ENCODE measurements at regions of chr6 and their contacts with region 1.

Region 1: GRCh38 chr6:89080542-89081422 is at the start of gene PNRC1:
- DNase-seq: peak; percentile 100
- ATAC-seq: peak; percentile 96
- H3K4me3 ChIP-seq: peak within 1 kb of the TSS; percentile 89 to 95
- H3K27ac ChIP-seq: peak within 1 kb of the TSS; percentile 99 to 100
- H3K4me1 ChIP-seq: peaks cover 0 to 2% of the 10 kb centered on the region in 2 donors
- H3K27me3 ChIP-seq: no peaks in the 10 kb centered on the region
- total RNA-seq, gene PNRC1: 280 to 342 TPM

Region 2: GRCh38 chr6:89022798-89023197 is 58.0 kb before region 1 on chr6:
- intact Hi-C with region 1: loop called (anchors 2 to 5 kb)
- DNase-seq: no peak
- ATAC-seq: peak; percentile 64
- H3K4me3 ChIP-seq: no peak overlapping the region
- H3K27ac ChIP-seq: peak overlapping the region in 1 of 2 donors; percentile 58
- H3K4me1 ChIP-seq: peaks cover 3 to 8% of the 10 kb centered on the region in 2 donors
- H3K27me3 ChIP-seq: no peaks in the 10 kb centered on the region

Region 3: DNA sequence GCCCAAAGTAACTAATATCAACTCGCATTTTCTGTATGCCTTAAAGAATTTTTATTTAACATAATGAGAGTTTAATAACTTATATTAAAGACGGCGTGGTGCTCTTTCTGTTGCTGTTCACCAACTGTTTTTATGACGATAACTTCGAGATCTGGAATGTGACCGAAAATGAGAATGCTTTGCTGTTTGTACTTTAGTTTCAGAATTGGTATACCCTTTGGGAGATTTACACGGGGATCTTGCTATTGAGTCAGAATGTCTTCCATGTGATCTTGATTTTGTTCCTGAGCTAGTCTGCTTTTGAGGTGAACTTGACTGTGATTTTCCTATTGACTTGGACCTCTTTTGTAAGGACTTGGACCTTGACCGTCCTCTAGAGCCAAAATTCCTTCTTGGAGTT is 17.7 kb after region 1 on chr6:
- intact Hi-C with region 1: loop called in 1 of 2 experiments (anchors 2 kb)
- DNase-seq: no peak
- ATAC-seq: no peak
- H3K4me3 ChIP-seq: no peak overlapping the region
- H3K27ac ChIP-seq: no peak overlapping the region
- H3K4me1 ChIP-seq: no peaks in the 10 kb centered on the region
- H3K27me3 ChIP-seq: no peaks in the 10 kb centered on the region

Region 4: GRCh38 chr6:89161326-89162046 is 80.7 kb after region 1 on chr6:
- intact Hi-C with region 1: loop called (anchors 5 kb)
- DNase-seq: no peak
- ATAC-seq: peak; percentile 77
- H3K4me3 ChIP-seq: peak overlapping the region in 1 of 2 donors; percentile 18
- H3K27ac ChIP-seq: peak overlapping the region; percentile 62 to 99
- H3K4me1 ChIP-seq: peaks cover 1 to 8% of the 10 kb centered on the region in 2 donors
- H3K27me3 ChIP-seq: no peaks in the 10 kb centered on the region